Spleen (tissue), 13 donors: ENCODE measurements at regions of chr18 and their contacts with region 1.

Region 1: GRCh38 chr18:45920367-45920766 is 46.8 kb downstream of the EPG5 start:
- DNase-seq: peak; percentile 83
- H3K4me3 ChIP-seq: no peak overlapping the region
- H3K27ac ChIP-seq: no peak overlapping the region
- H3K4me1 ChIP-seq: peaks cover 0 to 15% (median 11%) of the 10 kb centered on the region in 6 donors
- H3K27me3 ChIP-seq: no peaks in the 10 kb centered on the region
- CTCF ChIP-seq: no peak
- POLR2A ChIP-seq: no peak

Region 2: DNA sequence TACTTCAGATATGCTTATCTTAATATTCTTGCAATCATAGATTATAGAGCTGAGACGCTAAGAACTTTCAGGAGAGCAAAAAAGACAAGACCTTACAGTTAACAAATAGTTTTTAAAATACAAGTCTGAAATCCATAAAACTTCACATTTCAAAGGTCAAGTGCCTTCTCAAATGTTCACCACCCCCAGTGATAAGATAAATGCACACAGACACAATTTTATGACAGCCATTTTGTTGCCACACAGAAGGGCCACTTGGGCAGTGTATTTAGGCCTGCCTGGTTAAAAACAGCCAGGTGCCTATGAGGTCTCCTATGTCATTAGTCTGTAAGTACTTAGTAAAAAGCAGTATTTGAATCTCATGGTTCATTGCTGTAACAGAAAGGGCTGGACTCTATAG is 159.8 kb after region 1 on chr18:
- intact Hi-C with region 1: loop called (anchors 10 kb)
- DNase-seq: no peak
- H3K4me3 ChIP-seq: no peak overlapping the region
- H3K27ac ChIP-seq: no peak overlapping the region
- H3K4me1 ChIP-seq: no peaks in the 10 kb centered on the region
- H3K27me3 ChIP-seq: no peaks in the 10 kb centered on the region
- CTCF ChIP-seq: no peak
- POLR2A ChIP-seq: no peak

Region 3: GRCh38 chr18:46213295-46213694 is 292.9 kb after region 1 on chr18:
- intact Hi-C with region 1: no loop called
- DNase-seq: no peak
- H3K4me3 ChIP-seq: no peak overlapping the region
- H3K27ac ChIP-seq: no peak overlapping the region
- H3K4me1 ChIP-seq: peaks cover 12 to 90% (median 45%) of the 10 kb centered on the region in 6 donors
- H3K27me3 ChIP-seq: no peaks in the 10 kb centered on the region
- CTCF ChIP-seq: peak in 7 of 11 experiments; percentile 28 to 50 (median 39)
- POLR2A ChIP-seq: no peak